ENCODE measurements at regions of chr6 and their contacts with region 1.

Region 1: DNA sequence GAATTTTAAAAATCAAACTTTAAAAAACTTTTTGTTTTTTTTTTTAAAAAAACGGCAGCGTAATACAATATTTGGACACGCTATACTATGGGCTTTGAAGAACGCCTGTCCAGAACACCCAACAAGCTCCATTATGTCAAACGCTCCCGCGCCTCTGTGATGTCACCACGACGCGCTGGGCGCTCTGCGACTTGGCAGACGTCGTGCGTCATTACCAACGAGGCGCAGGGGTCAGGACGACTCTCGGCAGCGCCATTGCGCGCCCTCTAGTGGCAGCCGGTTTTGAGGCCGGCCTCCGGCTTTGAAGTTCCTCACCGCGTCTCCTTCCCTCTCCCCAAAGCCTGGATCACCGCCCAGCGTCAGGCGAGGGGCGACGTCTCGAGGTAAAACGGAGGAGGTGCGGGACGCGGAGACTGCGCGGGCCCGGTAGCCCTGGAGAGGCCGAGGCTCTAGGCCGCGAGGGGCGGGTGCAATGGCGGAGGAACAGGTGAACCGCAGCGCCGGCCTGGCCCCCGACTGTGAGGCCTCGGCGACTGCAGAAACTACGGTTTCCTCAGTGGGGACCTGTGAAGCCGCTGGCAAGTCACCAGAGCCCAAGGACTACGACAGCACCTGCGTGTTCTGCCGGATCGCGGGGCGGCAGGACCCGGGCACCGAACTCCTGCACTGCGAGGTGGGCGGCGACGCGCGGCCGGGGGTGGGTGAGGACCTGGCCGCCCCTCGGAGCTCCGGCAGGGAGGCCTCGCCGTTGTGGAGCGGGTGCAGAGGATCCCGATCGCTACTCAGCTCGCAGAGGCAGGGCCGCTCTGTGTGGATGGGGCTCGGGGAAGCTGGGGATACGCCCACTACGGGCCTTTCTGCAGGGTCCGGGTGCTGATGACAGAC is at the start of gene HINT3:
- DNase-seq: peak; percentile 97 to 99 (median 98)
- H3K4me3 ChIP-seq: peak within 1 kb of the TSS; percentile 94
- H3K27ac ChIP-seq: peak within 1 kb of the TSS; percentile 79 to 87
- H3K4me1 ChIP-seq: peaks cover 8% of the 10 kb centered on the region
- H3K27me3 ChIP-seq: no peaks in the 10 kb centered on the region
- CTCF ChIP-seq: peak; percentile 99
- EP300 ChIP-seq: peak; percentile 62
- POLR2A ChIP-seq: peak; percentile 38
- total RNA-seq, gene HINT3: 15.9 to 20.4 (median 19.3) TPM

Region 2: DNA sequence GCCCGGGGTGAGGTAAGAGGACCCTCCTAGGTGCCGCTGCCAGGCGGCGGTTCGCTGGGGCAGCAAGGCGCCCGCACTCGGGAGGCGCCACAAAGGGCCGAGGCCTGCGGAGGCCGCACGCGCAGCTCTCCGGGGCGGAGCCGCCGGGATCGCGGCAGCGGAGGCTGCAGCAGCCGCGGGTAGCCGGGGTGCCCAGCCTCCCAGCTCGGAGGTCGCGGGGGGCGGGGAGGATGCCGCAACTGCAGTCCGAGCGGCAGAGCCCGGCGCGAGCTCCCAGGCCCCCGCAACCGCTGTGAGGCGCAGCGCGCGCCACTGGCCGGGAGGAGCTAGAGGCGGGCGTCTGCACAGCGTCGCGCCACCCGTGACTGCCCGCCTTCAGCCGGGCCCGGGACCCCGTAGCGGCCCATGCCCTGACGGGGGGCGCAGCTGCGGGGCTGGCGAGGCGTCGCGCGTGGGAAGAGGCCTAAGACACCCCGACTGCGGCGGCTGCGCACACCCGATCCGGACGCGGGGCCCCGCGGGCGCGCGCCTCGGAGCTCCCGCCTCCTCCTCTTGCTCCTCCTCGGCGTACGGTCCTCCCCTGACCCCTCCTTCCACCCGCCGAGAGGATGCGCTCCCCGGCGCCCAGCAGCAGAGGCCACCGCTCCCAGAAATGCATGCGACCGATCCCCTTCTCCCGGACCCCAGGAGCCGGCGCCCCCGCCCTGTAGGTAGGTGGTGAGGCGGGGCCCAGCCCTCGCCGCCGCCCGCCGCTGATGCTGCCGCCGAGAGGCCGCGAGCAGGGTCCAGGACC is 166.2 kb before region 1 on chr6 and contains the start of gene NCOA7:
- intact Hi-C with region 1: loop called (anchors 2 to 5 kb)
- DNase-seq: peak; percentile 81 to 87 (median 85)
- H3K4me3 ChIP-seq: peak within 1 kb of the TSS; percentile 75
- H3K27ac ChIP-seq: peak within 1 kb of the TSS; percentile 99
- H3K4me1 ChIP-seq: peaks cover 6% of the 10 kb centered on the region
- H3K27me3 ChIP-seq: no peaks in the 10 kb centered on the region
- CTCF ChIP-seq: peak in 2 of 3 donors; percentile 4 to 7
- EP300 ChIP-seq: no peak
- POLR2A ChIP-seq: peak; percentile 89
- total RNA-seq, gene NCOA7: 16.8 to 54.1 (median 34.9) TPM

Region 3: GRCh38 chr6:125858427-125859320 is 98.1 kb before region 1 on chr6:
- intact Hi-C with region 1: loop called in 1 of 4 experiments (anchors 10 kb)
- DNase-seq: peak in 4 of 5 donors; percentile 19 to 57 (median 32)
- H3K4me3 ChIP-seq: no peak overlapping the region
- H3K27ac ChIP-seq: no peak overlapping the region
- H3K4me1 ChIP-seq: no peaks in the 10 kb centered on the region
- H3K27me3 ChIP-seq: no peaks in the 10 kb centered on the region
- CTCF ChIP-seq: peak in 1 of 3 donors; percentile 12
- EP300 ChIP-seq: no peak
- POLR2A ChIP-seq: no peak

Region 4: DNA sequence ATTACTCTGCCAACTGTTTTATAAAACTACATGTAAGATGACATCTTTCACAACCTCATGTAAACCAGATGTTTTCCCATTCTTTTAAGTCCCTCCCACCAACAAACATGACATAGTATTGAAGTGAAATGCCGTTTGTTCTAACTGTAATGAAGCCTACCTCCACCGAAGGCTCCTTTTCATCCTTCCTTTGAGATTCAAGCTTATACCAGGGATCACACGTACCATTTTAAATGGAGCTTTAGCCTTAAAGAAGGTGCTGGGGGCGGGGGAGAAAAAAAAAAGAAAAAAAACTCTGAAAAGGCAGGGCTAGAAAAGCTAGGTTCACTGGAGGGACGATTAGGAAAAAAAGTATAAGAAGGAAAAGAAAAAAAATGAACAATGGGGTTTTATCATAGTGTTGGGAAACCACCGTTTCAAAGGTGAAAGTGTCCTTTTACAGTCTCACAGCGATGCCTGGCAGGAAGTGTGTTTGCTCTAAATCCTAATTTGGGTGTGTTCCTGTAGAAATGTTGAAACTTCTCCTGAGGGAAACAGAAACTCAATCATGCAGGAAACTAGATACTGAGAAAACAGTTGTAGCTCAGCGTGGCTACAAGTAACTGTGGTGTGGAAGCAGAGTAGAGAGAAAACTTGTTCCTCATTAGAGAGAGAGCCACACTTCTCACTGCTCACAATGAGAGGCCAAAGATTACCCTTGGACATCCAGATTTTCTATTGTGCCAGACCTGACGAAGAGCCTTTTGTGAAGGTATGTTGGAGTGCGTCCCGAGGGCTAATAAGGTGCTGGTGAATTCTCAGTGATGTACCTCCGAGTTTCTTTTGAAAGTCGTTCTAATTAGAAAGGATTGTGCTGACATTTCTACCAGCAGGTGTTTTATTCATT is 37.8 kb before region 1 on chr6:
- intact Hi-C with region 1: no loop called
- DNase-seq: peak in 3 of 5 donors; percentile 33 to 68 (median 47)
- H3K4me3 ChIP-seq: no peak overlapping the region
- H3K27ac ChIP-seq: peak overlapping the region in 1 of 2 donors; percentile 52
- H3K4me1 ChIP-seq: no peaks in the 10 kb centered on the region
- H3K27me3 ChIP-seq: no peaks in the 10 kb centered on the region
- CTCF ChIP-seq: no peak
- EP300 ChIP-seq: no peak
- POLR2A ChIP-seq: no peak

Measured in ovary (tissue), 10 donors.